HAP-1 (cell line): ENCODE measurements at regions of chr16 and their contacts with region 1.

Region 1: GRCh38 chr16:77675464-77676324 is 46.6 kb upstream of the NUDT7 start:
- DNase-seq: peak; percentile 36 to 77
- H3K4me3 ChIP-seq: no peak overlapping the region
- H3K4me1 ChIP-seq: no peaks in the 10 kb centered on the region
- H3K27me3 ChIP-seq: 0 out of 2 replicates have a peak, but pooled peaks cover 7% of the 10 kb centered on the region

Region 2: DNA sequence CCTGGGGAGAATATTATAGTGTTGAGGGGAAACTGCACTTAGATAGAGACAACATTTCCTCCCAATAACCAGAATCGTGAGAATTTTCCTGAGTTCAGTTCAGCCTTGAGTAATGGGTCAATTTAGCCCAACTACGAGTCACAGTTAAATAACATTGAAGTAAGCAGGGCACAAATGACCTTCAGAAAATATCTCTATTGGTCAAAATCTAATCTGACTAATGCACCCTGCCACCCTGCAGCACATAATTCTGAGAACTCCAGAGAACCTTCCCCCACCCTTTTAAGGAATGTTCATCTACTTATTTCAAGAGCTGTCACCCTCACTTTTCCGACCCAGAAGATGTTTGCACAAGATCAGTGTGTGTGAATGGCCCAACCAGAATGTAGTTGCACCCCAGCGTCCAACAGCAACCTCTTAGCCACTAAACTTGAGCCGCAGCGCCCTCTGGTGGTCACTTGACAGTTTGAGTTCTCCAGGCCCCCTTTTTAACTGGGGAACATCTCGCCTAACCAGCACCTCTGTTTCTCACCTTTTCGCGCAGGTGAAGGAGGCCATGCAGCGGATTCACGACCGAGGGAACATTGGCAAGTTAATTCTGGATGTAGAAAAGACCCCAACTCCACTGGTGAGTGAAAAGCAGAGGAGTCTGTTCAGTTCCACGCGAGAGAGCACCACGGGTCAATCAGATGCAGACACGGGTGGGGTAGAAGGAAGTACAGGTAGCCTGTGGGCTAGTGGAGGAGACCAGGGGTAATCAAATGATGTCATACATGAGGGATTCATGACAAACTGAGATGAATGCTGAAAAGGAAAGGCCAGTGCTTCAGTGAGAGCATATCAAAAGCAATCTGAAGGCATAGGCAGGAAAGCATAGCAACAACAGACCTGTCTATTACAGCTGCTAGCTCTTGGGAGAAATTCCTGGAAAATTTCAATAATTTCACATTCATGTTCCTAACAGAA is 295.9 kb after region 1 on chr16:
- in situ Hi-C with region 1: loop called (anchors 5 kb)
- DNase-seq: peak; percentile 28 to 84
- H3K4me3 ChIP-seq: no peak overlapping the region
- H3K4me1 ChIP-seq: no peaks in the 10 kb centered on the region
- H3K27me3 ChIP-seq: no peaks in the 10 kb centered on the region; the same call in 1 of the 2 replicates

Region 3: GRCh38 chr16:78147896-78148535 is 472.3 kb after region 1 on chr16:
- in situ Hi-C with region 1: no loop called
- DNase-seq: no peak
- H3K4me3 ChIP-seq: no peak overlapping the region
- H3K4me1 ChIP-seq: no peaks in the 10 kb centered on the region
- H3K27me3 ChIP-seq: no peaks in the 10 kb centered on the region